Caco-2 (cell line): ENCODE measurements at regions of chr9 and their contacts with region 1.

Region 1: GRCh38 chr9:17116400-17116837 is 18.4 kb upstream of the CNTLN start:
- DNase-seq: peak in 1 of 2 experiments; percentile 6
- H3K4me3 ChIP-seq: no peak overlapping the region
- H3K4me3 Mint-ChIP-seq: no peak overlapping the region
- H3K27ac Mint-ChIP-seq: no peak overlapping the region
- H3K4me1 ChIP-seq: no peaks in the 10 kb centered on the region
- H3K4me1 Mint-ChIP-seq: no peaks in the 10 kb centered on the region
- H3K27me3 ChIP-seq: no peaks in the 10 kb centered on the region
- H3K27me3 Mint-ChIP-seq: peaks cover 3% of the 10 kb centered on the region
- CTCF ChIP-seq: peak in 1 of 2 experiments; percentile 33

Region 2: DNA sequence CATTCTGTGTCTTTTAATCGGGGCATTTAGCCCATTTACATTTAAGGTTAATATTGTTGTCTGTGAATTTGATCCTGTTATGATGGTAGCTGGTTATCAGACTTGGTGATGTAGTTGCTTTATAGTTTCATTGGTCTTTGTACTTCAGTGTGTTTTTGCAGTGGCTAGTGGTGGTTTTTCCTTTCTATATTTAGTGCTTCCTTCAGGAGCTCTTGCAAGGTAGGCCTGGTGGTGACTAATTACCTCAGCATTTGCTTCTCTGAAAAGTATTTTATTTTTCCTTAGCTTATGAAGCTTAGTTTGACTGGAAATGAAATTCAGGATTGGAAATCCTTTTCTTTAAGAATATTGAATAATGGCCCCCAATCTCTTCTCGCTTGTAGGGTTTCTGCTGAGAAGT is 175.3 kb after region 1 on chr9:
- CTCF ChIA-PET with region 1: no interaction called
- POLR2A ChIA-PET with region 1: no interaction called
- intact Hi-C with region 1: loop called (anchors 5 kb)
- DNase-seq: no peak
- H3K4me3 ChIP-seq: no peak overlapping the region
- H3K4me3 Mint-ChIP-seq: peak overlapping the region; percentile 78
- H3K27ac Mint-ChIP-seq: peak overlapping the region; percentile 92
- H3K4me1 ChIP-seq: peaks cover 10% of the 10 kb centered on the region; the same call in 1 of the 2 replicates
- H3K4me1 Mint-ChIP-seq: peaks cover 7% of the 10 kb centered on the region
- H3K27me3 ChIP-seq: no peaks in the 10 kb centered on the region
- H3K27me3 Mint-ChIP-seq: no peaks in the 10 kb centered on the region
- CTCF ChIP-seq: no peak

Region 3: GRCh38 chr9:17462869-17463464 is 346.5 kb after region 1 on chr9:
- CTCF ChIA-PET with region 1: no interaction called
- POLR2A ChIA-PET with region 1: no interaction called
- intact Hi-C with region 1: loop called (anchors 1 kb)
- DNase-seq: peak in 1 of 2 experiments; percentile 32
- H3K4me3 ChIP-seq: no peak overlapping the region
- H3K4me3 Mint-ChIP-seq: no peak overlapping the region
- H3K27ac Mint-ChIP-seq: no peak overlapping the region
- H3K4me1 ChIP-seq: no peaks in the 10 kb centered on the region
- H3K4me1 Mint-ChIP-seq: no peaks in the 10 kb centered on the region
- H3K27me3 ChIP-seq: no peaks in the 10 kb centered on the region
- H3K27me3 Mint-ChIP-seq: no peaks in the 10 kb centered on the region
- CTCF ChIP-seq: peak; percentile 42 to 54